Activated CD4-positive, alpha-beta T cell treated with anti-CD3 and anti-CD28 coated beads, Interleukin-2, amount 10 ng/mL, durations not matched to agents 24 days and 14 days (primary cell): ENCODE measurements at regions of chr21 and their contacts with region 1.

Region 1: DNA sequence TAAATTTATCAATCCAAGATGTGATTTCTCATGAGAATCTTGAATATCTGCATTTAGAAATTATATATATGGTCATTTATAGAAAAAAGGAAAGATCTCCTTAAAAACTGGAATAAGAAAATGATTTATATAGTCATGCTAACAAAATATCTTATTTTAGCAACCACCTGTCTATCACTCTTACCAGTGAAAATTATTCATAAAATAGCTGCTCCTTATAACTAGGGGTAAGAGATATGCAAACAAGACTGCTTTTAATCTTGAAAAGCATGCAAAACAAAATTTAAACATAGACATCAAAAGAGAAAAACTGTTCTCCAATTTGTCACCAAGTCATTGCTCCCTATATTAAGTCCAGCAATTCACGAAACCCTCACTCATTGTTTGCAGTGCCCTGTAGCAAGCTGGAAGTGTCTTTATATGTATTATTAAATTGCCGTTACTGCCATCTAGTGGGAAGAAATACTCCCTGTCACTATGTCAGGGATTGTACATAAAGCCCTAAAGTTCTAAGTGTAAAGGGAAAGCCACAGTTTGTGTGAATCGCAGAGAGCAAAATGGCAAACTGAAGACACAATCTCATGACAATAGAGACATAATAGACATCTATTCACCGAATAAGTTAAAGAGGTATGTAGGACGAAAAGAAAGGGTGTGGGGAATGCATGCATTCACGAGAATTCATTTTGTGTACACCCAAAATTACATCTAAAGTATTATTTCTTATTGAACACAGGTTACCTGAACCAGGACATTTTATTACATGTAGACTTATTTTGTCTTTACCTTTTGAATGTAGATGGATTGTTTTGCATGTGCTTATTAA is 600.5 kb downstream of the USP25 start:
- DNase-seq: peak; percentile 65
- H3K4me3 Mint-ChIP-seq: no peak overlapping the region
- H3K27ac Mint-ChIP-seq: no peak overlapping the region
- H3K4me1 Mint-ChIP-seq: no peaks in the 10 kb centered on the region
- H3K27me3 Mint-ChIP-seq: peaks cover 3% of the 10 kb centered on the region

Region 2: DNA sequence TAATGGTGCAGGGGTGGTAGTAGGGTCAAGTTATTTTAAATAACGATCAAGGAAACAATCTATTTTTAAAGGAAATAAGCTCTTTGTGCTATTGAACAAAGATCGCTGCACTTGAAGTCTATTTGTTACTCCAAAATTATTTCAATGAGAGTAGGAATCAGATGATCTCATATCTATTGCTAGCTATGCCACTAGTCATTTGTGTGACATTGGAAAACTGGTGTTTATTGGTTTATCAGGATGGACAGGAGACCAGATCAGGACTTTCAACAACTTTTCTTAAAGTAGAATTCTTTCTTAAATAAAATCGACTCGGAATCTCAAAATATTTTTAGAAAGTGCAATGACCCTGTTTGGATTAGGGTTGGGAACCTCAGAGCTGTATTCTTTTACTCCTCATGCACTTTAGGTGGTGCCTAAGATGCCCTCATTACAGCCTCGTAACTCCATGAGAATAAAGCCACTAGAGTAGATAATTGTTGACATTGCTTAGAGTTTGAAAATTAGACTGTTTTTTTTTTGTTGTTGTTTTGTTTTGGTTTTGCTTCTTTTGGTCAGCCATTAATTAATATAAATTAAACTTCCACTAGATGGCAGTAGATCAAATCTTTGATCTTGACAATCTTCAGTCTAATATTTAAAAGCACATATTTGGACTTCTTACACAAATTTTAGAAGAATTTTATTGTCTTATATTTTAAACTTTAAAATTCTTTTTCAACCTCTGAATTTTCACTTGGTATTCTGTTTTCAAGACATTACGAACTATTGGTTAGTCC is 248.1 kb before region 1 on chr21:
- intact Hi-C with region 1: loop called (anchors 5 kb)
- DNase-seq: no peak
- H3K4me3 Mint-ChIP-seq: no peak overlapping the region
- H3K27ac Mint-ChIP-seq: no peak overlapping the region
- H3K4me1 Mint-ChIP-seq: no peaks in the 10 kb centered on the region
- H3K27me3 Mint-ChIP-seq: no peaks in the 10 kb centered on the region